Aorta (tissue), 5 donors: ENCODE measurements at regions of chr17 and their contacts with region 1.

Region 1: DNA sequence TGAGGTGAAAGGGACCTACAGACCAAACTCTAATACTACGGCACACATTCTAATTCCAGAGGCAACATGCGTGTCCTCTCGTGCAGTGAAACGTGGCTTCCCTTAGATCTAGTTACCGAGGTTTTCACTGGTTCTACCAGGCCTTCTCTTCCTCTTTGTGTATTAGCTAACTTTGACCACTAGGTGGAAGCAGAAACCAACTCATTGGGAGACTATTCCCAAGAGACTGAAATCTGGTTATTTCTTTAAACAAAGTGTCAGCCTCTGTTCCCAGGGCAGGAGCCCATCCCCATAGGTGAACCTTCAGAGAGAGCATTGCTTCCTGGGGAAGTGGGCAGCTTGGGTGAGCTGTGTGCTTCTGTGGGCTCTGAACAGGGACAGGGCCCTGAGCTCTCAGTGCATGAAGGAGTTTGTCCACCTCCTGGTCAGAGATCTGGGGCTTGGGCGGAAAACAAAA is 19.7 kb upstream of the RCVRN start:
- DNase-seq: no peak
- ATAC-seq: peak; percentile 81
- H3K4me3 ChIP-seq: no peak overlapping the region
- H3K27ac ChIP-seq: no peak overlapping the region
- H3K4me1 ChIP-seq: no peaks in the 10 kb centered on the region
- H3K27me3 ChIP-seq: no peaks in the 10 kb centered on the region

Region 2: DNA sequence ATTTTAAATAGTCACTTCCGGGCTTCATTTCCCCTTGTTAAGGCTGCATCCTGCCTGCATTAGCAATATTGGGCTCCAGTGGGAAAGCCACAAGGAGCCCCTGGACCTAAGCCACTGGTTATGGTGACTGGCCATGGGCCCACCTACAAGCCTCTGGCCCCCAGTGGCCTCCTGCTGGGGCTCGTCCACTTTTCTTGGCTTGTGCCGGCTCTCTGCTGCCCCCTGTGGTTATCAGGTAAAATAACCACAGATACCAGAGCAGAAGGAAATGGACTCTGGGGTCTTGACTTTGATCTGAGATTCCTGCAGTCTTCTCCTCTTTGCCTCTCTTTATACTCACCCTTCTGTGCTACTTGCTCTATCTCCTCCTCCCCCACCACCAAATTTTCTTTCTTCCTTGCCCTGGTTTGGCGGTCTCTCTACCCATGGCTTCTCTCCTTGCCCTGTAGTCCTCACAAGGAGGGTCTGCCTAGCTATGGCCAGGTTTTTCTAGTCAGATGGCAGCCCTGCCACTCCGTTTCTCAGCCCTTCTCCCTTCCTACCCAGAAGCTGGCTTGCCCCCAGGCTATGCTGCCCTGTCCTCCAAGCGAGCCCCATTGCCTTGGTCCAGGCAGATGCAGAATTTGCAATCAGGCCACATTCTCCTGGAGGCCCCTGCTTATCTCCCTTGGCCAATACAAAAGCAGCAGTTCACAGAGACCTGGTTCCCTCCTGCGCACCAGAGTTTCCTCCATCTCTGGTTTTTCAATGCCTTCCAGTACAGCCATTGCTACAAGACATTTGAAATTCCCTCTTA is 63.2 kb after region 1 on chr17:
- intact Hi-C with region 1: loop called in 1 of 2 experiments (anchors 10 kb)
- DNase-seq: no peak
- ATAC-seq: peak; percentile 60
- H3K4me3 ChIP-seq: no peak overlapping the region
- H3K27ac ChIP-seq: no peak overlapping the region
- H3K4me1 ChIP-seq: no peaks in the 10 kb centered on the region
- H3K27me3 ChIP-seq: no peaks in the 10 kb centered on the region

Region 3: GRCh38 chr17:10618202-10618635 is 693.5 kb after region 1 on chr17:
- intact Hi-C with region 1: loop called (anchors 2 to 5 kb)
- DNase-seq: peak; percentile 69 to 85
- ATAC-seq: peak; percentile 89
- H3K4me3 ChIP-seq: no peak overlapping the region
- H3K27ac ChIP-seq: no peak overlapping the region
- H3K4me1 ChIP-seq: no peaks in the 10 kb centered on the region
- H3K27me3 ChIP-seq: no peaks in the 10 kb centered on the region